ENCODE measurements at regions of chr15 and their contacts with region 1.

Region 1: DNA sequence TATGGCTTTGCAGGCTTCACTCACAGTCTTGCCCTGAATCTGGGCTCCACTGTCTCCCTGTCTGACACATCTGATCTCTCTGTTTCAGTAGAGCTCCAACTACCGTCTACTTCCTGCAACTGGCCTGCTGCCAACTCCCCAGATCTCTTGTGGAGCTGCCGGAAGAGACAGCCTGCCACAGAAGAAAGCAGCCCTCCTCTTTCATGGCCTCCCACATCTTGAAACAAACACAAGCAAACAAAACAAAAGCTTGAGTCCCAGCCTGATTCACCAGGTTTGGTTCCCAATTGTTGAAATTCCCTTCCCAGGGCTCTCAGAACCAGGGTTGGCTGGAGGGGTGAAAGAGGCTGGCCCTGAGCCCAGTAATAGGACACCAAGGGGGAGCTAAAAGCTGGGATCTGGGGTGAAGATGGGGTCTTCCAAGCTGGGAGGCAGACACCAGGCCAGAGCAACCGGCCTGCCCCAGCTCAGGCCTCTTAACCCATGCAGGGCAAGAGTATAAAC is 55.3 kb upstream of the CA12 start:
- DNase-seq: peak; percentile 92
- H3K4me3 Mint-ChIP-seq: no peak overlapping the region
- H3K27ac Mint-ChIP-seq: peak overlapping the region; percentile 17
- H3K4me1 Mint-ChIP-seq: peaks cover 41% of the 10 kb centered on the region
- H3K27me3 Mint-ChIP-seq: no peaks in the 10 kb centered on the region

Region 2: DNA sequence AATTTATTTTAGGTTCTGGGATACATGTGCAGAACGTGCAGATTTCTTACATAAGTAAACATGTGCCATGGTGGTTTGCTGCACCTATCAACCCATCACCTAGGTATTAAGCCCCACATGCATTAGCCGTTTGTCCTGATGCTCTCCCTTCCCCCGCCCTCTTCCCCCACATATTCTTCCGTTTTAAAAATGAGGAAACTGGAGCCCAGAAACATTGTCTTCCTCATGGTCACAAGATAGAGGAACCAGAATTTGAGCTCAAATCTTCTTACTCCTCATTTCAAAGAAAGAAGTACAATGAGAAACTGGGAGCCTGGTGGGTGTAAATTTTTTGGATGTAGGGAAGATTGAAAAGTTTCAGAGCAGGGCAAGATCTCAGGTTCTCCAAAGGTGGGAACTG is 11.3 kb after region 1 on chr15:
- CTCF ChIA-PET with region 1: interaction called, 11 read pairs
- intact Hi-C with region 1: no loop called
- DNase-seq: no peak
- H3K4me3 Mint-ChIP-seq: no peak overlapping the region
- H3K27ac Mint-ChIP-seq: no peak overlapping the region
- H3K4me1 Mint-ChIP-seq: peaks cover 22% of the 10 kb centered on the region
- H3K27me3 Mint-ChIP-seq: no peaks in the 10 kb centered on the region

Region 3: GRCh38 chr15:63610200-63610841 is 173.4 kb after region 1 on chr15:
- CTCF ChIA-PET with region 1: no interaction called
- intact Hi-C with region 1: no loop called
- DNase-seq: peak; percentile 91
- H3K4me3 Mint-ChIP-seq: no peak overlapping the region
- H3K27ac Mint-ChIP-seq: peak overlapping the region; percentile 83
- H3K4me1 Mint-ChIP-seq: peaks cover 24% of the 10 kb centered on the region
- H3K27me3 Mint-ChIP-seq: no peaks in the 10 kb centered on the region

Measured in activated naive CD4-positive, alpha-beta T cell treated with anti-CD3 and anti-CD28 coated beads for 36 hours (primary cell).